Heart right ventricle (tissue), 16 donors: ENCODE measurements at regions of chr2 and their contacts with region 1.

Region 1: GRCh38 chr2:105438104-105438929 is 39.5 kb upstream of the FHL2 start:
- DNase-seq: peak; percentile 72 to 83
- ATAC-seq: peak; percentile 81 to 91 (median 89)
- H3K4me3 ChIP-seq: peak overlapping the region; percentile 15 to 62 (median 50)
- H3K27ac ChIP-seq: peak overlapping the region; percentile 82 to 96 (median 90)
- H3K4me1 ChIP-seq: peaks cover 3 to 18% (median 13%) of the 10 kb centered on the region in 9 donors
- H3K27me3 ChIP-seq: no peaks in the 10 kb centered on the region
- CTCF ChIP-seq: no peak

Region 2: GRCh38 chr2:105369747-105370690 is 68.3 kb before region 1 on chr2:
- intact Hi-C with region 1: loop called in 2 of 10 experiments (anchors 5 to 10 kb)
- DNase-seq: peak; percentile 81 to 84
- ATAC-seq: peak; percentile 7 to 60 (median 53)
- H3K4me3 ChIP-seq: no peak overlapping the region
- H3K27ac ChIP-seq: peak overlapping the region in 7 of 10 donors; percentile 7 to 93 (median 78)
- H3K4me1 ChIP-seq: peaks cover 3 to 88% (median 41%) of the 10 kb centered on the region in 9 donors
- H3K27me3 ChIP-seq: no peaks in the 10 kb centered on the region
- CTCF ChIP-seq: peak; percentile 64 to 91 (median 85)

Region 3: GRCh38 chr2:105487142-105488069 is 49.1 kb after region 1 on chr2:
- intact Hi-C with region 1: loop called in 6 of 10 experiments (anchors 2 to 5 kb)
- DNase-seq: peak; percentile 37 to 57
- ATAC-seq: peak; percentile 40 to 85 (median 58)
- H3K4me3 ChIP-seq: no peak overlapping the region
- H3K27ac ChIP-seq: peak overlapping the region; percentile 76 to 96 (median 87)
- H3K4me1 ChIP-seq: peaks cover 0 to 42% (median 24%) of the 10 kb centered on the region in 9 donors
- H3K27me3 ChIP-seq: no peaks in the 10 kb centered on the region
- CTCF ChIP-seq: no peak

Region 4: GRCh38 chr2:105496271-105496670 is 58.0 kb after region 1 on chr2:
- intact Hi-C with region 1: loop called in 4 of 10 experiments (anchors 2 to 10 kb)
- DNase-seq: peak in 1 of 2 donors; percentile 48
- ATAC-seq: peak; percentile 22 to 85 (median 80)
- H3K4me3 ChIP-seq: no peak overlapping the region
- H3K27ac ChIP-seq: peak overlapping the region; percentile 68 to 94 (median 88)
- H3K4me1 ChIP-seq: peaks cover 0 to 55% (median 43%) of the 10 kb centered on the region in 9 donors
- H3K27me3 ChIP-seq: no peaks in the 10 kb centered on the region
- CTCF ChIP-seq: no peak

Region 5: DNA sequence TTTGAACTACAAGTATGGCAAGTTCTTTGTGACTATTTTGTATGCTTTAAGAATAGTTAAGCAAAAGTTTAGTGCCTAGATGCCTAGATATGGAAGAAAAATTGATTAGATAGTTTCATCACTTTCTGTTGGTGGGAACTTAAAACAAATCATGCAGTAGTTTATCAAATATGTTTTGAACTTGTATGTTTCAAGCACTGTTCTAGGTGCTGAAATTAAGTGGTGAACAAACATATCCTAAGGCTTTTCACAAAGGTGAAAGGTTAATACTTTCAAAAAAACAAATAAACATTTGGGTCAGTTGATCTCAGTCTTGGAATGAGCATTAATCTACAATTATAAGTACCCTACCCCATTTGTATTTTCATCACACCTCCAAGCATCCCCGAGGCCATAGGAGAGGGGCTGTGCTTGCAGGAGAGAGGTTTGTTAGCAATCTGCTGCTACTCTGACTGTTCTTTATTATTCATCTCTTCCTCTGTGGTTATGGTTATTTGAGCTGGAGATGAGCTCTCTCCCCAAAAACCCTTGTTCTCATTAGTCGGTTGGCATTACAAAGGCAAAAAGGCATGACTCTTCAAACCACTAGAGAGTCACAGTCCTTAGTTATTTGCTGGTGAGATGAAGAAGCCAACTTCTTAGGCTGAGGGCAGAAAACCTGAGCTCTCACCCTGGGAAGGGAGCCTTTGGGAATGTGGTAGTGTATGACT is 64.5 kb after region 1 on chr2:
- intact Hi-C with region 1: loop called in 2 of 10 experiments (anchors 5 to 10 kb)
- DNase-seq: no peak
- ATAC-seq: no peak
- H3K4me3 ChIP-seq: no peak overlapping the region
- H3K27ac ChIP-seq: peak overlapping the region in 2 of 10 donors; percentile 11 to 30
- H3K4me1 ChIP-seq: peaks cover 0 to 34% (median 14%) of the 10 kb centered on the region in 9 donors
- H3K27me3 ChIP-seq: no peaks in the 10 kb centered on the region
- CTCF ChIP-seq: no peak